ENCODE measurements at regions of chr7 and their contacts with region 1.

Region 1: GRCh38 chr7:129367700-129368388 is 66.4 kb upstream of the STRIP2 start:
- DNase-seq: peak; percentile 90
- H3K4me3 Mint-ChIP-seq: peak overlapping the region; percentile 52
- H3K27ac Mint-ChIP-seq: peak overlapping the region; percentile 84
- H3K4me1 Mint-ChIP-seq: peaks cover 39% of the 10 kb centered on the region
- H3K27me3 Mint-ChIP-seq: no peaks in the 10 kb centered on the region

Region 2: GRCh38 chr7:129083525-129083924 is 284.3 kb before region 1 on chr7:
- CTCF ChIA-PET with region 1: no interaction called
- POLR2A ChIA-PET with region 1: no interaction called
- intact Hi-C with region 1: no loop called
- DNase-seq: no peak
- H3K4me3 Mint-ChIP-seq: no peak overlapping the region
- H3K27ac Mint-ChIP-seq: no peak overlapping the region
- H3K4me1 Mint-ChIP-seq: no peaks in the 10 kb centered on the region
- H3K27me3 Mint-ChIP-seq: no peaks in the 10 kb centered on the region

Region 3: DNA sequence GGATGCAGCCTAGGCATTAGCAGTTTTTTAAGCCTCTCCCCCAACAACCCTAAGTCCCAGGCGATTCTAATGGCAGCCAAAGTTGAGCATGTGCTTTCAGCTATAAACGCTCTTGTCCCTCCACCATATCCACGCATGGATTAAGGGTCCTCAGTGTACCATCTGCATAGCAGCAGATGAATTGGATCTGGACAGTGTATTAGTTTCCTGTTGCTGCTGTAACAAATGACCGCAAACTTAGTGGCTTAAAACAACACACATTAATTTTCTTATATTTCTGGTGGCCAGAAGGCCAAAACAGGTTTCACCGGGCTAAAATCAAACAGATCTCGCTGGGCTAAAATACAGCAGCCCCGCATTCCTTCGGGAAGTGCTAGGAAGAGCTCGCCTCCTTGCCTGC is 210.2 kb before region 1 on chr7:
- CTCF ChIA-PET with region 1: no interaction called
- POLR2A ChIA-PET with region 1: no interaction called
- intact Hi-C with region 1: no loop called
- DNase-seq: no peak
- H3K4me3 Mint-ChIP-seq: no peak overlapping the region
- H3K27ac Mint-ChIP-seq: no peak overlapping the region
- H3K4me1 Mint-ChIP-seq: no peaks in the 10 kb centered on the region
- H3K27me3 Mint-ChIP-seq: no peaks in the 10 kb centered on the region

Region 4: GRCh38 chr7:129252128-129252527 is 115.7 kb before region 1 on chr7:
- CTCF ChIA-PET with region 1: no interaction called
- POLR2A ChIA-PET with region 1: no interaction called
- intact Hi-C with region 1: no loop called
- DNase-seq: no peak
- H3K4me3 Mint-ChIP-seq: no peak overlapping the region
- H3K27ac Mint-ChIP-seq: no peak overlapping the region
- H3K4me1 Mint-ChIP-seq: peaks cover 1% of the 10 kb centered on the region
- H3K27me3 Mint-ChIP-seq: no peaks in the 10 kb centered on the region

Region 5: DNA sequence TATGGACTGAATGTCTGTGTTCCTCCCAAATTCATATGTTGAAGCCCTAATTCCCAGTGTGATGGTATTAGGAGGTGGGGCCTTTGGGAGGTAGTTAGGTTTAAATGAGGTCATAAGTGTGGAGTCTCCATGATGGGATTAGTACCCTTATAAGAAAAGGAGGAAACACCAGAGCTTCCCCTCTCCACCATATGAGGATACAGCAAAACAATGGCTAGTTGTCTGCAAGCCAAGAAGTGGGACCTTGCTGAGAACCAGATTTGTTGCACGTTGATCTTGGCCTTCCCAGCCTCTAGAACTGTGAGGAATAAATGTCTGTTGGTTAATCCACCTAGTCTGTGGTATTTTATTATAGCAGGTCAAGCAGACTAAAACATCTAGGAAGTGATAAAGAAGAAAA is 40.8 kb before region 1 on chr7:
- CTCF ChIA-PET with region 1: no interaction called
- POLR2A ChIA-PET with region 1: no interaction called
- intact Hi-C with region 1: no loop called
- DNase-seq: no peak
- H3K4me3 Mint-ChIP-seq: no peak overlapping the region
- H3K27ac Mint-ChIP-seq: no peak overlapping the region
- H3K4me1 Mint-ChIP-seq: no peaks in the 10 kb centered on the region
- H3K27me3 Mint-ChIP-seq: no peaks in the 10 kb centered on the region

Region 6: DNA sequence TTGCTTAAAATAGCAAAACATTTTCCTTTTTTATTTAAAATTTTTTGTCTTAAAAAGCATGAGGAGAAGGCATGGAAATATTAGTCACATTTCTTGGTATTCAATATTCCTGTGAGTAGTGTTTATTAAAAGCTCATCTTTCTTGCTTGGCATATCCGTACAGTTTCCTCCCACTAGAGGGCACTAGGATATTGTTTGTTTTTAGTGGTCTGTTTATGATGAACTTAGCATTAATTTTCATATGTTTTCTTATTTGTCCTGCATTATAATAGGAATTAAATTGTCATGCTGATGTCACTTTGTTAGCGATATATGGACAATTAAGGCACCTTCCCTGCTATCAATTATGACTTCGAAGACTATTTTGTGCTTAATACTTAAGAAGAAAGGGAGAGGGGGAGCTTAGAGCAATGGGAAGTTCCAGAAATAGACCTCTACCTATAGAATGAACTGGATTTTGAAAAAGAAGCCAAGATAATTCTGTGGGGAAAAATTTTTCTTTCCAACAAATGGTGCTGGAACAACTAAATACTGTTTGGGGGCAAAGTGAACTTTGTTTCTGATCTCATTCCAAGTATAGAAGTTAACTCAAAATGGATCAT is 24.6 kb before region 1 on chr7:
- CTCF ChIA-PET with region 1: interaction called, 35 read pairs
- POLR2A ChIA-PET with region 1: interaction called, 3 read pairs
- intact Hi-C with region 1: loop called (anchors 1 kb)
- DNase-seq: no peak
- H3K4me3 Mint-ChIP-seq: no peak overlapping the region
- H3K27ac Mint-ChIP-seq: no peak overlapping the region
- H3K4me1 Mint-ChIP-seq: peaks cover 30% of the 10 kb centered on the region
- H3K27me3 Mint-ChIP-seq: no peaks in the 10 kb centered on the region

Region 7: GRCh38 chr7:129389829-129390228 is 22.0 kb after region 1 on chr7:
- CTCF ChIA-PET with region 1: interaction called, 27 read pairs
- POLR2A ChIA-PET with region 1: interaction called, 3 read pairs
- intact Hi-C with region 1: no loop called
- DNase-seq: no peak
- H3K4me3 Mint-ChIP-seq: no peak overlapping the region
- H3K27ac Mint-ChIP-seq: no peak overlapping the region
- H3K4me1 Mint-ChIP-seq: peaks cover 8% of the 10 kb centered on the region
- H3K27me3 Mint-ChIP-seq: no peaks in the 10 kb centered on the region

Region 8: GRCh38 chr7:129468087-129468486 is 100.2 kb after region 1 on chr7:
- CTCF ChIA-PET with region 1: interaction called, 114 read pairs
- POLR2A ChIA-PET with region 1: interaction called, 7 read pairs
- intact Hi-C with region 1: loop called (anchors 1 kb)
- DNase-seq: no peak
- H3K4me3 Mint-ChIP-seq: no peak overlapping the region
- H3K27ac Mint-ChIP-seq: no peak overlapping the region
- H3K4me1 Mint-ChIP-seq: peaks cover 13% of the 10 kb centered on the region
- H3K27me3 Mint-ChIP-seq: no peaks in the 10 kb centered on the region

Region 9: GRCh38 chr7:129635300-129636029 is 267.6 kb after region 1 on chr7:
- CTCF ChIA-PET with region 1: interaction called, 23 read pairs
- POLR2A ChIA-PET with region 1: no interaction called
- intact Hi-C with region 1: no loop called
- DNase-seq: peak; percentile 81
- H3K4me3 Mint-ChIP-seq: no peak overlapping the region
- H3K27ac Mint-ChIP-seq: peak overlapping the region; percentile 16
- H3K4me1 Mint-ChIP-seq: peaks cover 36% of the 10 kb centered on the region
- H3K27me3 Mint-ChIP-seq: no peaks in the 10 kb centered on the region